AG04450 (cell line): ENCODE measurements at regions of chr12 and their contacts with region 1.

Region 1: GRCh38 chr12:19739183-19739776 is 300.0 kb downstream of the AEBP2 start:
- DNase-seq: peak; percentile 38
- H3K4me3 ChIP-seq: no peak overlapping the region
- H3K27ac ChIP-seq: no peak overlapping the region
- H3K27me3 ChIP-seq: no peaks in the 10 kb centered on the region
- CTCF ChIP-seq: peak; percentile 63

Region 2: DNA sequence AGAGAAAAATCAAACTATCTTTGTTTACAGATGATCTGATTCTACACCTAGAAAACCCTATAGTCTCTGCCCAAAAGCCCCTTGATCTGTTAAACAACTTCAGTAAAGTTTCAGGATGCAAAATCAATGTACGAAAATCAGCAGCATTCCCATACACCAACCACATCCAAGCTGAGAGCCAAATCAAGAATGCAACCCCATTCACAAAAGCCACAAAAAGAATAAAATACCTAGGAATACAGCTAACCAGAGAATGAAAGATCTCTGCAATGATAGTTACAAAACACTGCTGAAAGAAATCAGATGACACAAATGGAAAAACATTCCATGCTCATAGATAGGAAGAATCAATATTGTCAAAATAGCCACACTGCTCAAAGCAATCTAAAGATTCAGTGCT is 34.3 kb before region 1 on chr12:
- CTCF ChIA-PET with region 1: no interaction called
- POLR2A ChIA-PET with region 1: no interaction called
- DNase-seq: no peak
- H3K4me3 ChIP-seq: no peak overlapping the region
- H3K27ac ChIP-seq: no peak overlapping the region
- H3K27me3 ChIP-seq: no peaks in the 10 kb centered on the region
- CTCF ChIP-seq: no peak

Region 3: DNA sequence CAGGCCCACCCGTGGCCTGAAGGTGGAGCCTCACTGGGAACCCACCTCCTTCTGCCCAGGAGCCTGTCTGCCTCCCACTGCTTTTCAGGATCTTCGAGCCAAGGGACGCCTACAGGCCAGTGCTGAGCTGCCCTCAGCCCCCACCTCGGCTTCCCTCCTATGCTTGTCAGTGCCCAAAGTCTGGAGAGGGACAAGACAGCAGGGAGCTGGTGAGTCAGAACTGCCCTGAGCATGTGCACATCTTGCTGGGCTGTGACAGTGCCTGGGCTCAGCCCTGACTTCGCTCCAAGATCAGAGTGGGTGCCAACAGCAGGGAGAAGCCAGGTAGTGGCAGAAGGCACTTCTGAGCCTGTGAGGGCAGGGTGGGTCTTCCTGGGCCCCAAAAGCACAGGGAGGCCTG is 13.2 kb before region 1 on chr12:
- CTCF ChIA-PET with region 1: interaction called, 20 read pairs
- POLR2A ChIA-PET with region 1: no interaction called
- DNase-seq: no peak
- H3K4me3 ChIP-seq: no peak overlapping the region
- H3K27ac ChIP-seq: no peak overlapping the region
- H3K27me3 ChIP-seq: no peaks in the 10 kb centered on the region
- CTCF ChIP-seq: no peak

Region 4: DNA sequence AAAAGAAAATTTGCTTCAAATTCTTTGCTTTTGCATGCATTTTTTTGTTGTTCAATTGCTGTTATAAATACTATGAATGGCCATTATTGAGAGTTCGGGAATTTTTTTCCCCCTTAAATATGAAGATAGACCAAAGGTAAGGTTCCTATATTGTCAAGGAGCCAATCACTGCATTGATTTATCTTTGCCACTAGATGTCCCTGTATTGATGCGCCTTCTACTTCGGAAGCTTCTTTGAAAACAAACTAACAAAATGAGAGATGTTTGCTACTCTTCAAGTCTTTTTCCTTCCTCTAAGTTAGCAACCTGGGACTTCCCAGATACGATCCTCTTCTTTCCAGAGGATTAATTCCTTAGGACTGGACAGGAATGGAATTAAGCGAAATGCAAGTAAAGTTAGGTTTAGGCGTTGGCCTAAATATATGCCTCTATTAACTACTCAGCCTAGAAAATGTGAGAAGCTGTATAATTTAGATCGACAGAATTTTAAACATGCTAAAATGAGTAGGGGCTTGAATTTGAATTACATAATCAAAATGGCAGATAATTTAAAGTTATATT is 18.1 kb after region 1 on chr12:
- CTCF ChIA-PET with region 1: interaction called, 13 read pairs
- POLR2A ChIA-PET with region 1: no interaction called
- DNase-seq: no peak
- H3K4me3 ChIP-seq: no peak overlapping the region
- H3K27ac ChIP-seq: no peak overlapping the region
- H3K27me3 ChIP-seq: no peaks in the 10 kb centered on the region
- CTCF ChIP-seq: peak; percentile 75

Region 5: DNA sequence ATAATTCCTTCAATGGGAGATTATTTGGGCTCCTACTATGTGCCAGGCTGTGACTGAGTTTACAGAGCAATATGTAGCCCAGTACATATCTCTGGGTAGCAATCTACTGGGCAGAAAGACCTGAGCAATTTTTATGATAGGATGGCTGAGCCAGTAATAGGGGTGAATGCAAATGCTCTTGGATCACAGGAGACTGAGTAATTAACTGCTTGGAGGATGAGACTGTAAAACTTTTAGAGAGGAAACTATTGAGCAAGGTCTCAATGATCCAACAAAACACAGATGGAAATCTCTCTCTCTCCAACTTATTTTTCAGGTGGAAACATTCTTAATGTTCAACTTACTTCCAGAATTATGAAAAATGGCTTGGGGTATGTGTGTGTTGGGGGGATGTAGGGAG is 102.2 kb after region 1 on chr12:
- CTCF ChIA-PET with region 1: no interaction called
- POLR2A ChIA-PET with region 1: no interaction called
- DNase-seq: no peak
- H3K4me3 ChIP-seq: no peak overlapping the region
- H3K27ac ChIP-seq: no peak overlapping the region
- H3K27me3 ChIP-seq: no peaks in the 10 kb centered on the region
- CTCF ChIP-seq: no peak

Region 6: DNA sequence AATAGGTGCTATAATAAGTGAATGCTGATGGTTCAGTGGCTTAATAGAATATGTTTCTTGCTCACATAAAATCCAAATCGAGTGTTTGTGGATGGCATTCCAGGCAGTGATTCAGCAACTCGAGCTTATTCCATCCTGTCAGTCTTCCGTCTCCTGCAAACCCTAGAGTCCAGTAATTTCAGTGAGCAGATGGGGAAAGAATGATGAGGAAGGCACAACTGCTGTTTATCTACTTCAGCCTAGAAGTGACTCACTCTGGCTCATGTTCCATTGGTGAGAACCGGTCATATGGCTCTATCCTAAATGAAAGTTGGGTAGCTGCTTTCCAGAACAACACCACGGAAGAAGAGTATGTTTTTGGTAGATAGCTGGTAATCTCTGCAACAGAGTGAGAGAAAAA is 207.3 kb after region 1 on chr12:
- CTCF ChIA-PET with region 1: interaction called, 14 read pairs
- POLR2A ChIA-PET with region 1: no interaction called
- DNase-seq: peak; percentile 81
- H3K4me3 ChIP-seq: peak overlapping the region; percentile 10; the same call in 1 of the 2 replicates
- H3K27ac ChIP-seq: no peak overlapping the region
- H3K27me3 ChIP-seq: no peaks in the 10 kb centered on the region
- CTCF ChIP-seq: no peak

Region 7: DNA sequence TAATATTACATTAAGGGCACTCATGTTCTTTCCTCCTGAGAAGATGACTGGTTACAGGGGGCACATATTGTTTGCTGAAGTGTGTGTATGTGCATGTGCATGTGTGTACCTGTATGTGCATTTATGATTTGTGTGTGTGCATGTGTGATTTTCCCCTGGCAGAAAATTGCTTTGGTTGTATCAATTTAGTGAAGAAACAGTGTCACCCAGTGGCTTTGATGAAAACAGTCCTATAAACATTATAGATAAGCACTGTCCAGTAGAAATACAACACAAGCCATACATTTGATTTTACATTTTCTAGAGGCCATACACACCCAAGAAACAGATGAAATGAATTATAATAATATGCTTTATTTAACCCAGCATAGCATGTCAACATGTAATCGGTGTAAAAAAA is 637.7 kb after region 1 on chr12:
- CTCF ChIA-PET with region 1: interaction called, 18 read pairs
- POLR2A ChIA-PET with region 1: no interaction called
- DNase-seq: no peak
- H3K4me3 ChIP-seq: no peak overlapping the region
- H3K27ac ChIP-seq: no peak overlapping the region
- H3K27me3 ChIP-seq: peaks cover 2% of the 10 kb centered on the region
- CTCF ChIP-seq: peak; percentile 34